T-cell (primary cell): ENCODE measurements at regions of chr2 and their contacts with region 1.

Region 1: DNA sequence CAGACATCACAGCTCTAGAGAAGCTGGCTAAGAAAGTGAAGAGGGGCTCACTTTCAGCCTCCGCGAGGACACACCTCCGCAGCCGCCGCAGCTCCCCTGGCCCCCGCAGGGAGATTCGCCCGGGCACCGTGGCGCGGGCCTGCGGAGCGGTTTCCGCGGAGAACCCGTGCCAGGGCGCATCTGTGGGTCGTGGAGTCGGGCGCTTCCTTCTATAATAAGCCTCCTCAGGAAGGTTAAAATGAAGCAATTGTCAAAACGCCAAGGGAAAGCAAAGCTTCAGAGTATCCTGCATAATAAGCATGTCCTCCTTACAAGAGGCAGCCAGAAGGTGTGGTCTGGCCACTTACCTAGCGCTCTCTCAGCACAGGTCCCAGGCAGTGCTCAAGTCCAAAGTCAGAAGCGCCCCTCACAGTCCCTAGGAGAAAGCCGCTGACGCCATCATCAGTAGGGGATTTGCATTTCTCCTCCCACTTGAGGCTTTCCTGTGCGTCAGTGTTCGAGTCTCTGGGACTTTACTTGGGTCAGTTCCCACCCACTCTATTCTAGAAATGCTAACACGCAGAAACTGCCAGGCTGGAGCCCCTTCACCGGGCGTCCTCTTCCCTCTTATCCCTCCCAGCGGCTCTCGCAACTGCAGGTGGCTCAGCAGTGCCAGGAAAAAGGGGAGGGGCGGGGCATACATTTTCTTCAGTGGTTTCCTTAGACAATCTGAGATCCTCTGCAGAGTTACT is at the start of gene STAT4:
- DNase-seq: peak; percentile 43 to 95 (median 85)
- ATAC-seq: peak; percentile 84 to 88 (median 84)
- H3K4me3 ChIP-seq: peak within 1 kb of the TSS; percentile 91 to 98
- H3K4me3 Mint-ChIP-seq: peak within 1 kb of the TSS; percentile 90 to 93 (median 90)
- H3K27ac ChIP-seq: peak within 1 kb of the TSS; percentile 99
- H3K27ac Mint-ChIP-seq: peak within 1 kb of the TSS; percentile 95 to 96
- H3K4me1 ChIP-seq: peaks cover 27 to 31% of the 10 kb centered on the region in 2 experiments
- H3K4me1 Mint-ChIP-seq: peaks cover 63 to 67% (median 64%) of the 10 kb centered on the region in 3 donors
- H3K27me3 ChIP-seq: no peaks in the 10 kb centered on the region
- H3K27me3 Mint-ChIP-seq: no peaks in the 10 kb centered on the region
- total RNA-seq, gene STAT4: 79.5 to 141 (median 91.7) TPM

Region 2: GRCh38 chr2:190627448-190628412 is 523.0 kb before region 1 on chr2:
- CTCF ChIA-PET with region 1: no interaction called
- POLR2A ChIA-PET with region 1: no interaction called
- DNase-seq: peak in 16 of 35 experiments; percentile 4 to 50 (median 16)
- ATAC-seq: peak; percentile 83 to 87 (median 86)
- H3K4me3 ChIP-seq: peak overlapping the region; percentile 47 to 90
- H3K4me3 Mint-ChIP-seq: peak overlapping the region; percentile 81 to 93 (median 91)
- H3K27ac ChIP-seq: no peak overlapping the region
- H3K27ac Mint-ChIP-seq: peak overlapping the region; percentile 48 to 89
- H3K4me1 ChIP-seq: peaks cover 4 to 7% of the 10 kb centered on the region in 2 experiments
- H3K4me1 Mint-ChIP-seq: peaks cover 28 to 36% (median 32%) of the 10 kb centered on the region in 3 donors
- H3K27me3 ChIP-seq: peaks cover 0 to 5% of the 10 kb centered on the region in 2 experiments
- H3K27me3 Mint-ChIP-seq: peaks cover 0 to 4% of the 10 kb centered on the region in 2 donors

Region 3: DNA sequence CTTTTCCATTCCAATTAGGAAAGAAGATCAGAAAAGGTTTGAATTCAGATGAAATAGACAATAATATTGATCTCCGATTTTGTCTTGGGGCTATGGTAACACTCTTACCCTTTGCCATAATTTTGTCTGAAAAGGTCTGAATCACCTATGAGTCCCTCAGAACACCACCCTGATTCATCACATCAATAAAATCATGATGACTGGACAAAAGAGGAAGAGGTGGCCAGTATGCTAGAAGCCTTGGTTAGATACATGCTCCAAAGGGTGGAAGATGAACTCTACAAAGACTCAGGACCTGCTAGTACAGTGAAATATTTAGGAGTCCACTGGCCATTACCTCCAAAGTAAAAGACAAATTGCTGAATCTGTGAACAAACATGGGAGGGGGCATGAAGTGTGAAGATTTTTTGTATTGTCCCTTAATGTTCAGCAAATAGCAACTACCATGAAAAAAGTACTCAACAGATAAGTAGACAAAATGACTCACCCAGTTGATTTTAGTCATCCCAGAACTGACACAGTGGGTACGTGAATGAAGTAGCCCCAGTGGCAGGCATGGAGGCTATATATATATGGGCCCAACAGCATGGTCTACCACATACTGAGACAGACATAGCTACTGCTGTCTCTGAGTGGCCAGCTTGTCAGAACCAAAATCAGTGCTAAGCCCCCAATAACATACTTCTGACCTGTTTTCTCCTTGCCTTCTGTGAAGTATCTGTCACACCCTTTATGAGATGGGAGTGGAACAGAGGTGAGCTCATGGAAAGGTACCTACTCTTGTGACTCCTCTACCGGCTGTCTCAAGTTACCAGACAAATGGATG is 306.7 kb before region 1 on chr2:
- CTCF ChIA-PET with region 1: no interaction called
- POLR2A ChIA-PET with region 1: no interaction called
- DNase-seq: no peak
- ATAC-seq: no peak
- H3K4me3 ChIP-seq: no peak overlapping the region
- H3K4me3 Mint-ChIP-seq: no peak overlapping the region
- H3K27ac ChIP-seq: no peak overlapping the region
- H3K27ac Mint-ChIP-seq: no peak overlapping the region
- H3K4me1 ChIP-seq: no peaks in the 10 kb centered on the region
- H3K4me1 Mint-ChIP-seq: no peaks in the 10 kb centered on the region
- H3K27me3 ChIP-seq: no peaks in the 10 kb centered on the region
- H3K27me3 Mint-ChIP-seq: no peaks in the 10 kb centered on the region

Region 4: GRCh38 chr2:191064590-191064989 is 86.2 kb before region 1 on chr2:
- CTCF ChIA-PET with region 1: interaction called, 22 to 26 read pairs
- POLR2A ChIA-PET with region 1: interaction called, 8 to 14 read pairs
- DNase-seq: peak in 20 of 35 experiments; percentile 1 to 54 (median 14)
- ATAC-seq: peak in 3 of 4 experiments; percentile 45 to 61 (median 56)
- H3K4me3 ChIP-seq: peak overlapping the region; percentile 10 to 23
- H3K4me3 Mint-ChIP-seq: peak overlapping the region; percentile 73 to 87 (median 80)
- H3K27ac ChIP-seq: peak overlapping the region; percentile 55
- H3K27ac Mint-ChIP-seq: peak overlapping the region; percentile 98
- H3K4me1 ChIP-seq: peaks cover 34 to 55% of the 10 kb centered on the region in 2 experiments
- H3K4me1 Mint-ChIP-seq: peaks cover 76 to 85% (median 82%) of the 10 kb centered on the region in 3 donors
- H3K27me3 ChIP-seq: no peaks in the 10 kb centered on the region
- H3K27me3 Mint-ChIP-seq: no peaks in the 10 kb centered on the region

Region 5: GRCh38 chr2:191114403-191114886 is 36.3 kb before region 1 on chr2:
- CTCF ChIA-PET with region 1: interaction called, 3 to 16 read pairs
- POLR2A ChIA-PET with region 1: interaction called in 1 of 2 experiments, 66 read pairs
- DNase-seq: peak in 30 of 35 experiments; percentile 7 to 70 (median 36)
- ATAC-seq: peak; percentile 32 to 65 (median 44)
- H3K4me3 ChIP-seq: no peak overlapping the region
- H3K4me3 Mint-ChIP-seq: peak overlapping the region; percentile 38 to 49 (median 46)
- H3K27ac ChIP-seq: peak overlapping the region; percentile 96
- H3K27ac Mint-ChIP-seq: peak overlapping the region; percentile 84 to 94
- H3K4me1 ChIP-seq: peaks cover 12 to 33% of the 10 kb centered on the region in 2 experiments
- H3K4me1 Mint-ChIP-seq: peaks cover 73 to 84% (median 81%) of the 10 kb centered on the region in 3 donors
- H3K27me3 ChIP-seq: no peaks in the 10 kb centered on the region
- H3K27me3 Mint-ChIP-seq: no peaks in the 10 kb centered on the region

Region 6: GRCh38 chr2:191165176-191165643 is 14.4 kb after region 1 on chr2:
- CTCF ChIA-PET with region 1: interaction called, 6 to 14 read pairs
- POLR2A ChIA-PET with region 1: interaction called in 1 of 2 experiments, 3 read pairs
- DNase-seq: peak in 9 of 35 experiments; percentile 5 to 72 (median 26)
- ATAC-seq: peak in 3 of 4 experiments; percentile 71 to 79 (median 71)
- H3K4me3 ChIP-seq: no peak overlapping the region
- H3K4me3 Mint-ChIP-seq: no peak overlapping the region
- H3K27ac ChIP-seq: no peak overlapping the region
- H3K27ac Mint-ChIP-seq: no peak overlapping the region
- H3K4me1 ChIP-seq: peaks cover 0 to 2% of the 10 kb centered on the region in 2 experiments
- H3K4me1 Mint-ChIP-seq: peaks cover 6 to 14% (median 9%) of the 10 kb centered on the region in 3 donors
- H3K27me3 ChIP-seq: no peaks in the 10 kb centered on the region
- H3K27me3 Mint-ChIP-seq: no peaks in the 10 kb centered on the region